CD4-positive, alpha-beta T cell (primary cell): ENCODE measurements at regions of chr3 and their contacts with region 1.

Region 1: GRCh38 chr3:57397175-57398026 is 104.9 kb upstream of the ASB14 start:
- DNase-seq: peak; percentile 26 to 77 (median 48)
- ATAC-seq: peak; percentile 99
- H3K4me3 ChIP-seq: no peak overlapping the region
- H3K4me3 Mint-ChIP-seq: peak overlapping the region; percentile 1
- H3K27ac ChIP-seq: no peak overlapping the region
- H3K27ac Mint-ChIP-seq: peak overlapping the region; percentile 14
- H3K4me1 ChIP-seq: peaks cover 6% of the 10 kb centered on the region
- H3K4me1 Mint-ChIP-seq: peaks cover 16% of the 10 kb centered on the region
- H3K27me3 ChIP-seq: no peaks in the 10 kb centered on the region
- H3K27me3 Mint-ChIP-seq: peaks cover 10% of the 10 kb centered on the region
- CTCF ChIP-seq: peak; percentile 83

Region 2: DNA sequence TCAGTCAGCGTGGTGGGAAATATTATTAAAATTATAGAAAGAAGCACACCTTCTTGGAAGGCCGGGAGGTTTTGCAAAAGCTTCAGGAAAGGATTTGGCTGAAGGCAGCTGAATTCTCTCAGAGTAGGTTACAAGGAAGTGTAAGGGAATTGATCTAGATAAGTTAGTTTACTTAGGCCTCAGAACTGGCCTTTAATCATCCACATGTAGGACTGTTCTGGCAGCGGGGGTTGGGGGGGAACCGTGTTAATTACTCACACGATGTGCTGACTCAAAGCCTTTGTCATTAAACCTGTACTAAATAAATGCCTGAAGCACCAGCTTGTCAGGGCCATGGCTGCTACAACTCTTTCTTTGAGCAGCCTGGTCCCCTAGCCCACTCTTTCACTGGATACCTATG is 117.7 kb before region 1 on chr3:
- CTCF ChIA-PET with region 1: no interaction called
- POLR2A ChIA-PET with region 1: no interaction called
- intact Hi-C with region 1: no loop called
- DNase-seq: no peak
- ATAC-seq: no peak
- H3K4me3 ChIP-seq: no peak overlapping the region
- H3K4me3 Mint-ChIP-seq: no peak overlapping the region
- H3K27ac ChIP-seq: no peak overlapping the region
- H3K27ac Mint-ChIP-seq: no peak overlapping the region
- H3K4me1 ChIP-seq: no peaks in the 10 kb centered on the region
- H3K4me1 Mint-ChIP-seq: no peaks in the 10 kb centered on the region
- H3K27me3 ChIP-seq: no peaks in the 10 kb centered on the region
- H3K27me3 Mint-ChIP-seq: no peaks in the 10 kb centered on the region
- CTCF ChIP-seq: no peak

Region 3: GRCh38 chr3:57582474-57583168 is 185.2 kb after region 1 on chr3:
- CTCF ChIA-PET with region 1: no interaction called
- POLR2A ChIA-PET with region 1: no interaction called
- intact Hi-C with region 1: loop called in 1 of 2 experiments (anchors 10 kb)
- DNase-seq: peak in 2 of 14 experiments; percentile 31 to 44
- ATAC-seq: peak; percentile 64
- H3K4me3 ChIP-seq: no peak overlapping the region
- H3K4me3 Mint-ChIP-seq: no peak overlapping the region
- H3K27ac ChIP-seq: no peak overlapping the region
- H3K27ac Mint-ChIP-seq: peak overlapping the region; percentile 1
- H3K4me1 ChIP-seq: peaks cover 4% of the 10 kb centered on the region
- H3K4me1 Mint-ChIP-seq: peaks cover 30% of the 10 kb centered on the region
- H3K27me3 ChIP-seq: no peaks in the 10 kb centered on the region
- H3K27me3 Mint-ChIP-seq: no peaks in the 10 kb centered on the region
- CTCF ChIP-seq: no peak

Region 4: DNA sequence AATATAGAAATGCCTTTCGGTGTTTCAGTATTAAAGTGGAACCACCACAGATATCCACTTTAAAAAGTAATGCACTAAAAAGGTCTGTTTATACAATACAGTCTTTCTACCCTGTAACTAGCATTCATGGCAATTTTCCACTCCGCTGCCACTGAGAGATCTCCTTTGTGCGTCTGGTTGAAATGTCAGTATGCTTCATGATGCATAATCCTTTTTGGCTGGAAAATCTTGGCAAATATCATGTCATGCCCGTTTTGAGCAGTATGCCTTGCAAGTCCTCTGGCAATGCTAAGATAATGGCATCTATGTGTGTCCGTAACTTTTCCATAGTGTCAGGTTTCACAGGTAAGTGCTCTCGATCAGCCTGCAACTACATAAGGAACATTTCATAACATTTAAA is 230.6 kb after region 1 on chr3:
- CTCF ChIA-PET with region 1: no interaction called
- POLR2A ChIA-PET with region 1: no interaction called
- intact Hi-C with region 1: loop called in 1 of 2 experiments (anchors 10 kb)
- DNase-seq: no peak
- ATAC-seq: no peak
- H3K4me3 ChIP-seq: no peak overlapping the region
- H3K4me3 Mint-ChIP-seq: no peak overlapping the region
- H3K27ac ChIP-seq: no peak overlapping the region
- H3K27ac Mint-ChIP-seq: no peak overlapping the region
- H3K4me1 ChIP-seq: no peaks in the 10 kb centered on the region
- H3K4me1 Mint-ChIP-seq: no peaks in the 10 kb centered on the region
- H3K27me3 ChIP-seq: no peaks in the 10 kb centered on the region
- H3K27me3 Mint-ChIP-seq: no peaks in the 10 kb centered on the region
- CTCF ChIP-seq: no peak

Region 5: GRCh38 chr3:57852896-57853295 is 455.5 kb after region 1 on chr3:
- CTCF ChIA-PET with region 1: interaction called, 5 read pairs
- POLR2A ChIA-PET with region 1: no interaction called
- intact Hi-C with region 1: loop called (anchors 5 kb)
- DNase-seq: no peak
- ATAC-seq: no peak
- H3K4me3 ChIP-seq: no peak overlapping the region
- H3K4me3 Mint-ChIP-seq: no peak overlapping the region
- H3K27ac ChIP-seq: no peak overlapping the region
- H3K27ac Mint-ChIP-seq: no peak overlapping the region
- H3K4me1 ChIP-seq: no peaks in the 10 kb centered on the region
- H3K4me1 Mint-ChIP-seq: no peaks in the 10 kb centered on the region
- H3K27me3 ChIP-seq: no peaks in the 10 kb centered on the region
- H3K27me3 Mint-ChIP-seq: no peaks in the 10 kb centered on the region
- CTCF ChIP-seq: no peak